HCT116 (cell line): ENCODE measurements at regions of chr6 and their contacts with region 1.

Region 1: DNA sequence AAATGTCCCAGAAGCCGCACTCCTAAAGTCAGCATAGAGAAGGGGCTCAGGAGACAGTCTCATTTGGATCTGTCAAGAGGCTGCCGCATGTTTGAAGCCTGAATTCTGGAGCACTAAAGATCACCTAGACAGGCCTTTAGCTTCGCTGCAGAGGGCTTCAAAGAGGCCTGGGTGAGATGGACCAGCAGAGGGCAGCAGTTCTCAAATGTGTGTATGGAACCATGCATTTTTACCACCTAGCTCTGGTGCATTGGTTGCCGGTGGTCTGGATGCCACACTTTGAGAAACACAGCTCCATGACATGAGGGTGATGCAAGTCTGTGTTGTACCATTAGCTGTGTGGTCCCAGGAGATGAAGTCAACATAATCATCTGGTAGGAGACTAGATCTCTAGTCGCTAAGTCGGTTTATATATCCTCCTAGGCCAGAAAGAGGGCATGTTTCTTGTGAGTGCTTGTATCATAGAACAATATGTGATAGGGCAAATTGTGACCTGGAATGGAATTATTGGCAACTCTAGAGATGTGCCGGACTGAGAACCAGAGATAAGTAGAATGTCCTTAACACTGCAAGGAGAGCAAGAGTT is 64.8 kb downstream of the KIAA0319 start:
- DNase-seq: peak; percentile 64
- ATAC-seq: peak; percentile 87
- H3K4me3 ChIP-seq: no peak overlapping the region
- H3K27ac ChIP-seq: no peak overlapping the region
- H3K4me1 ChIP-seq: peaks cover 3 to 13% of the 10 kb centered on the region in 2 experiments; a peak in 3 of 4 replicates
- H3K27me3 ChIP-seq: no peaks in the 10 kb centered on the region
- CTCF ChIP-seq: peak; percentile 68 to 90 (median 89)
- POLR2A ChIP-seq: no peak
- RAD21 ChIP-seq: peak; percentile 77

Region 2: GRCh38 chr6:24568683-24569082 is 12.5 kb before region 1 on chr6:
- CTCF ChIA-PET with region 1: interaction called, 10 read pairs
- POLR2A ChIA-PET with region 1: no interaction called
- RAD21 ChIA-PET with region 1: no interaction called
- intact Hi-C with region 1: no loop called
- DNase-seq: no peak
- ATAC-seq: no peak
- H3K4me3 ChIP-seq: no peak overlapping the region
- H3K27ac ChIP-seq: no peak overlapping the region
- H3K4me1 ChIP-seq: no peaks in the 10 kb centered on the region
- H3K27me3 ChIP-seq: no peaks in the 10 kb centered on the region
- CTCF ChIP-seq: no peak
- POLR2A ChIP-seq: no peak
- RAD21 ChIP-seq: no peak

Region 3: GRCh38 chr6:24655215-24655614 is 74.0 kb after region 1 on chr6:
- CTCF ChIA-PET with region 1: no interaction called
- POLR2A ChIA-PET with region 1: no interaction called
- RAD21 ChIA-PET with region 1: no interaction called
- intact Hi-C with region 1: no loop called
- DNase-seq: no peak
- ATAC-seq: no peak
- H3K4me3 ChIP-seq: no peak overlapping the region
- H3K27ac ChIP-seq: no peak overlapping the region
- H3K4me1 ChIP-seq: no peaks in the 10 kb centered on the region
- H3K27me3 ChIP-seq: no peaks in the 10 kb centered on the region
- CTCF ChIP-seq: no peak
- POLR2A ChIP-seq: no peak
- RAD21 ChIP-seq: no peak

Region 4: DNA sequence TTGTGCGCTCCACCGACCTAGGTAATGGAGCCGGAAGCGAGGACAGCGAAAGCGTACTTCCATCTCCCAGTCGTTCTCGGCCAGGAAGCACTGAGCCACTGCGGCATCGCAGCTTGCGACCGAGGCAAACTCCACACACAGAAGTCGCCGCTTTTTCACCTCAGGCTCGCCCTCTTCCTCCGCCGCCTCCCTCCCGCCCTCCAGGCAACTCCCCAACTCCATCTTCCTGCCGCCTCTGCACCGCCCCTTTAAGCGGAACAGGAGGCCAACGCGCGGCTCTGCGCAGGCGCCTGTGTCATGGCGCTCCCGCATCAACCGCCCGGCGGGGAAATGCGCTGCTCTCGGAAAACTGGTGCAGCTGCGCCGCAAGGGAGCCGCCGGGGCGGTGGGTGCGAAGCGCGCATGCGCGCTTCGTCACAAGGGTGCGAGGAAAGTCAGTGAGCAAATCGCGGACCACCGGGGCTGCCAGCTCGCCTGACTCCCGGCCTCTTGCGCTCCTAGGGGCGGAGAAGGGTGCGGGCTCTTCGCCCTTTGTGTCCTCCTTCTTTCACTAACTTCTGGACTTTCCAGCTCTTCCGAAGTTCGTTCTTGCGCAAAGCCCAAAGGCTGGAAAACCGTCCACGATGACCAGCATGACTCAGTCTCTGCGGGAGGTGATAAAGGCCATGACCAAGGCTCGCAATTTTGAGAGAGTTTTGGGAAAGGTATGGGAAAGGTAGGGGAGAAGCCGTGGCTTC is 85.6 kb after region 1 on chr6 and contains the starts of genes ACOT13 and TDP2:
- CTCF ChIA-PET with region 1: interaction called, 13 read pairs
- POLR2A ChIA-PET with region 1: no interaction called
- RAD21 ChIA-PET with region 1: no interaction called
- intact Hi-C with region 1: no loop called
- DNase-seq: peak; percentile 93
- ATAC-seq: peak; percentile 96
- H3K4me3 ChIP-seq: peak within 1 kb of the TSS; percentile 91 to 97
- H3K27ac ChIP-seq: peak within 1 kb of the TSS; percentile 77
- H3K4me1 ChIP-seq: peaks cover 7 to 16% of the 10 kb centered on the region in 2 experiments; a peak in 3 of 4 replicates
- H3K27me3 ChIP-seq: no peaks in the 10 kb centered on the region
- CTCF ChIP-seq: peak in 2 of 3 experiments; percentile 45 to 58; a peak in 4 of 6 replicates
- POLR2A ChIP-seq: peak; percentile 70
- RAD21 ChIP-seq: 0 out of 2 replicates have a peak, but pooled peaks have one; percentile 20
- total RNA-seq, gene ACOT13: 33.5 TPM
- total RNA-seq, gene TDP2: 30.2 TPM

Region 5: DNA sequence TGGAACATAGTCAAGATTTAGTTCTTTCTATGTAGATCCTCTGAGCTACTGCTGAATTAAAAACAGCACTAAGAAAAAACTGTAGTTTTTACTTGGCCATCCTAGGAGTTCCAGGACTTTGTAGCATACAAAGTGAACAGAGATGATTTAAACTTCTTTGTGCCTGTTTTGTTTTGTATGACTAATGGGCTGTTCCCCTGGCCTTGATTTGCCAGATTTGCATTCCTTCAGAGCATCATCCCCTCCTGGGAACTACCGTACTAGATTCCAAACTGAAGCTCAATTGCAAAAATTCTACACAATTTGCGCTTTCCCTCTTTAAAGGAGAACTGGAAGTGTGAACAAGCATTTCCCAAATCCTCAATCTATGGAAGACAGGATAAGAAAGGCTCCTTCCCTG is 108.8 kb after region 1 on chr6:
- CTCF ChIA-PET with region 1: interaction called, 9 read pairs
- POLR2A ChIA-PET with region 1: no interaction called
- RAD21 ChIA-PET with region 1: interaction called in 1 of 2 experiments, 3 read pairs
- intact Hi-C with region 1: loop called (anchors 1 kb)
- DNase-seq: no peak
- ATAC-seq: no peak
- H3K4me3 ChIP-seq: no peak overlapping the region
- H3K27ac ChIP-seq: no peak overlapping the region
- H3K4me1 ChIP-seq: no peaks in the 10 kb centered on the region
- H3K27me3 ChIP-seq: no peaks in the 10 kb centered on the region
- CTCF ChIP-seq: no peak
- POLR2A ChIP-seq: no peak
- RAD21 ChIP-seq: no peak

Region 6: DNA sequence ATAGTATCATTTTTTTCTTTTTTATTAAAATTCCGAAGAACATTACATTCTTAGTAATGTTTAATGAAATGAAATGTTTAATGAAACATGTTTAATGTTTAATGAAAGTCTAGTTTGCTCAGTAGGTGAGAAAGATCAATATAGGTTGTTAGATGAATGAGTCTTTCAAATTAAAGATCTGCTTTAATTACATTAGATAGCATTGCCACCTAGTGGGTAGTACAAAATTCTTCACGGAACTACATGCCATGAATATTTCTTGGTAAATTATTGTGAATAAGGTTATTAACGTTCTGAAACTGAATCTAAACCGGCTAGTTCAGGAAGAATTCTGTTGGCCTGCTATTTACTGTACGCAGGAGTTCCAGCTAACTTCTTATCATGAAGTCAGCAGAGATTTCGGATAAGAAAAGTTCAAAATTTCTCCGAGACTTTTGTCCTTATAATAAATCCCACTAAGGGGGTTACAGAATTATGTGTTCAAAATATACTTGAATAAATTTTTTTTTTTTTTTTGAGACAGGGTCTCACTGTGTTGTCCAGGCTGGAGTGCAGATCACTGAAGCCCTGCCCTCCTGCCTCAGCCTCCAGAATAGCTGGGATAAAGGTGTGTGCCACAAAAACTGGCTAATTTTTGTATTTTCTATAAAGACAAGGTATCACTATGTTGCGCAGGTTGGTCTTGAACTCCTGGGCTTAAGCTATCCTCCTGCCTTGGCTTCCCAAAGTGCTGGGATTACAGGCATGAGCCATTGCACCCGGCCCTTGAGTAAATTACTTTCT is 185.7 kb after region 1 on chr6:
- CTCF ChIA-PET with region 1: interaction called, 7 read pairs
- POLR2A ChIA-PET with region 1: no interaction called
- RAD21 ChIA-PET with region 1: interaction called in 1 of 2 experiments, 3 read pairs
- intact Hi-C with region 1: loop called (anchors 2 kb)
- DNase-seq: no peak
- ATAC-seq: peak; percentile 71
- H3K4me3 ChIP-seq: no peak overlapping the region
- H3K27ac ChIP-seq: no peak overlapping the region
- H3K4me1 ChIP-seq: 0 out of 4 replicates have a peak, but pooled peaks cover 0 to 2% of the 10 kb centered on the region in 2 experiments
- H3K27me3 ChIP-seq: no peaks in the 10 kb centered on the region
- CTCF ChIP-seq: peak; percentile 28 to 71 (median 65); a peak in 5 of 6 replicates
- POLR2A ChIP-seq: no peak
- RAD21 ChIP-seq: peak; percentile 82

Region 7: DNA sequence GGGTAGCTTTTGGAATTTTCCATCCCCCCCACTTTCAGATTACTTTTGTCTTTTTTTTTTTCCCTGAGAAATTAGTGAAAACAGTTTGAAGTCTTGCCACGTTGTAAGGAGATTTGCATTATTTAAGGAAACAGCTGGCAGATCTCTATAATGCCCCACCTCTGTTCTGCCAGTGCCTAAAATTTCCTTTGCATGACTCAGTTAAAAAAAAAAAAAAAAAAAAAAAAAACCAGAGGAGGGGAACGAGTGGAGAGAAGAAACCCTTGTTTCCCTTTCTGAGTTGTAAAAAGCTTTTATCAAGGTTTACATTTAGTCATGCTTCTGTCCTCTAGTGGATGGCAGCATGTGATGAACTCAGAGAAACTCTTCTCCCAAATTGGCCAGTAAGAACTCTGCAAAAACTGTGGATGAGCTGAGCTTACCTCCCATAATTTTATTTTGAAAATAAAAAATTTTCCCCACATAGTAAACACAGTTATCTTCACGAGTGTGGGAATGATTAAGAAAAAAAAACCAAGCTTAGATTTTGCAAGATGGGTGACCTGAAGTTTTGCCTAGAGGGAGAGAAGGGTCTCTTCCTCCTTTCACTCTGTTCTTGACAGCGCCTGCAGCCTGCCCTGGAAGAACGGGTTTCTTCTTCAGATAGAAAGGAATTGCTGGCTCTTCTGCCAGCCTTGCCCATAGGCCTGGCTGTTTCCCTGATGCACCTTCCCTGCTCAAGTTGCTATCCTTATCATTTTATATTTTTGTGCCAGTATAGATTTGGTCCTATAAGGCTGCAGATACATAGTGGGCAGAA is 731.7 kb after region 1 on chr6:
- CTCF ChIA-PET with region 1: no interaction called
- POLR2A ChIA-PET with region 1: no interaction called
- RAD21 ChIA-PET with region 1: no interaction called
- intact Hi-C with region 1: no loop called
- DNase-seq: peak; percentile 13
- ATAC-seq: no peak
- H3K4me3 ChIP-seq: no peak overlapping the region; a peak in 1 of 4 replicates
- H3K27ac ChIP-seq: peak overlapping the region; percentile 26
- H3K4me1 ChIP-seq: peaks cover 31 to 39% of the 10 kb centered on the region in 2 experiments
- H3K27me3 ChIP-seq: no peaks in the 10 kb centered on the region
- CTCF ChIP-seq: no peak
- POLR2A ChIP-seq: no peak
- RAD21 ChIP-seq: no peak